Activated CD4-positive, alpha-beta T cell treated with anti-CD3 and anti-CD28 coated beads for 36 hours (primary cell): ENCODE measurements at regions of chr3 and their contacts with region 1.

Region 1: GRCh38 chr3:120417272-120417911 is 33.4 kb downstream of the FSTL1 start:
- DNase-seq: peak; percentile 93
- ATAC-seq: peak; percentile 99
- H3K4me3 Mint-ChIP-seq: peak overlapping the region; percentile 73
- H3K27ac Mint-ChIP-seq: peak overlapping the region; percentile 52
- H3K4me1 Mint-ChIP-seq: peaks cover 11% of the 10 kb centered on the region
- H3K27me3 Mint-ChIP-seq: peaks cover 4% of the 10 kb centered on the region

Region 2: GRCh38 chr3:119819806-119820205 is 597.6 kb before region 1 on chr3:
- CTCF ChIA-PET with region 1: interaction called, 3 read pairs
- POLR2A ChIA-PET with region 1: no interaction called
- intact Hi-C with region 1: loop called in 1 of 2 experiments (anchors 5 kb)
- DNase-seq: no peak
- ATAC-seq: no peak
- H3K4me3 Mint-ChIP-seq: no peak overlapping the region
- H3K27ac Mint-ChIP-seq: no peak overlapping the region
- H3K4me1 Mint-ChIP-seq: no peaks in the 10 kb centered on the region
- H3K27me3 Mint-ChIP-seq: no peaks in the 10 kb centered on the region

Region 3: DNA sequence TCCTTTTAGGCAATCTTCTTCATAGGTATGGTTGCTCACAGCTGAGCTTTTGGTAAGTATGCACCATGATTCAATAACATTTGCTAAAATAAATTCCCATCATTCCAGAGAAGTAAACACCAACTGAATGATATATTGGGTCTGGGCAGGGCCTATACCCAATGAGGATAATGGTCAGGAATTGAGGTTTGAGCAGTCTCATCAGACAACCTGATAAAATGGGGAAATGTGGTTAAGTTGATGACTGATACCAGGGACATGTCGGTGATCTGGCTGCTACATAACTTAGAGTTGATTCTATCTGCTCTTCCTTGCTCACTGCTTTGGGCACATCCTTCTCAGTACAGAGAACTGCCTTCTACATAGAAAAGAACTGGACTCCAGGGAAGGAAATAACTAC is 225.2 kb before region 1 on chr3:
- CTCF ChIA-PET with region 1: no interaction called
- POLR2A ChIA-PET with region 1: no interaction called
- intact Hi-C with region 1: no loop called
- DNase-seq: no peak
- ATAC-seq: no peak
- H3K4me3 Mint-ChIP-seq: no peak overlapping the region
- H3K27ac Mint-ChIP-seq: no peak overlapping the region
- H3K4me1 Mint-ChIP-seq: no peaks in the 10 kb centered on the region
- H3K27me3 Mint-ChIP-seq: no peaks in the 10 kb centered on the region

Region 4: GRCh38 chr3:120239644-120240043 is 177.7 kb before region 1 on chr3:
- CTCF ChIA-PET with region 1: interaction called, 131 read pairs
- POLR2A ChIA-PET with region 1: no interaction called
- intact Hi-C with region 1: loop called (anchors 1 kb)
- DNase-seq: no peak
- ATAC-seq: no peak
- H3K4me3 Mint-ChIP-seq: no peak overlapping the region
- H3K27ac Mint-ChIP-seq: no peak overlapping the region
- H3K4me1 Mint-ChIP-seq: no peaks in the 10 kb centered on the region
- H3K27me3 Mint-ChIP-seq: peaks cover 30% of the 10 kb centered on the region

Region 5: DNA sequence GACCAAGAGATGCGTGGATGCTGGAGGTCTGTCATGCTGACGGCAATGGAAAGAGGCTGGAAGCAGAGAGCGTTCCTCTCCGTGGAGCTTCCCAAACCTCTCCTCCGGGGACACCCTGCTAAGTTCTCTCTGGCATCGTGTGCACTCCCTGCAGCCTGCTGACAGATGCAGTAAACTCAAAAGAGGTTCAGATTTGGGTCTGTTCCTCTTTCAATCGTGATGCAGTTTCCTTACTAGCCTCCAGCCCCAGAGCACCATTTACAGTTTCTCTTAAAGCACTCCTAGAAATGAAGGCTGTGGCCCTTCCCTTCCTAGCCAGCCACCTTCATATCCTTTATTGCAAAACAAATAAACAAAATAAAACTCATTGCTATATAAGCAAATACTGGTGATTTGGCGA is 20.9 kb before region 1 on chr3:
- CTCF ChIA-PET with region 1: interaction called, 18 read pairs
- POLR2A ChIA-PET with region 1: interaction called, 3 read pairs
- intact Hi-C with region 1: no loop called
- DNase-seq: no peak
- ATAC-seq: no peak
- H3K4me3 Mint-ChIP-seq: no peak overlapping the region
- H3K27ac Mint-ChIP-seq: no peak overlapping the region
- H3K4me1 Mint-ChIP-seq: no peaks in the 10 kb centered on the region
- H3K27me3 Mint-ChIP-seq: no peaks in the 10 kb centered on the region

Region 6: DNA sequence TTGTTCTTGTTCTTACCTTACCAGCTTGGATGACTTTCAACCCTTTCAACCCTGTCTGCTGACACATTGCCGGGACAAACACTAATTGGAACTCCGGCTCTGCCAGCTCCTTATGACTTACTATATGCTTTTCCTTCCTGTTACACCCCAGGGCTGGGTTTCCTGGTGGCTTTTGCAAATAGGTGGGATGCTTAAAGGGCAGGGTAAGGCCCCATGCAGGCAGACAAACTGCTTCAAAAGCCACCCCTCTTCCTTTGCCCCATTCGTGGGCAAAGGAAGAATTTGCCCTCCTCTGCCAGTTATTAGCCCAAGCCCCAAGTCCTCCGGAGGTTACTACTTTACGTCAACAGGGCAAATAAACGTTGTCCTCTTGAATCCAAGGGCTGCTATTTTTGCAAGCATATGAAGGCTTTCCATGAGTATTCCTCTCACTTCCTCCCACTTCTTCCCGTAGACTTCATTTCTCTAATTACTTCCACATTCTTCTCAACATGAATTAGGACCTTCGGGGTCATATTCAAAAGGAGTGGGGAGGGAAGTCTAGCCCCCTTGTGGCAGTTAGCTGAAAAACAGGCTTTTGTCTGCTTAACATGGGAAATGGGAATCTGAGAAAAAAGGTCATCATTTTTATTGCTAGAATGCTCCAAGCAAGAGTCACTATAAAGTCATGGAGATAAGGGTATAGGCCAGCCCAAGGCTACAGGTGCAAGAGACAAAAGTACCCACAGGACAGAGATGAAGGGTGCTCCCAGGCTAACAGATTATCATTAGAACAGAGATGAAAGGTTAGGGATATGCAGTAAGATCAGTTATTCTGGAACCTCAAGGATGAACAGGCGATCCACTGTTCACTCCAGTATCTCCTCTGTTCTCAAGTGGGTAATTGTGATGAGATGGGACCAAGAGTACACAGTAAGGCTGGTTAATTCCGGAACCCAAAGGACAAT is 89.7 kb after region 1 on chr3:
- CTCF ChIA-PET with region 1: interaction called, 4 read pairs
- POLR2A ChIA-PET with region 1: no interaction called
- intact Hi-C with region 1: loop called in 1 of 2 experiments (anchors 2 kb)
- DNase-seq: peak; percentile 15
- ATAC-seq: no peak
- H3K4me3 Mint-ChIP-seq: no peak overlapping the region
- H3K27ac Mint-ChIP-seq: no peak overlapping the region
- H3K4me1 Mint-ChIP-seq: no peaks in the 10 kb centered on the region
- H3K27me3 Mint-ChIP-seq: peaks cover 14% of the 10 kb centered on the region

Region 7: GRCh38 chr3:120795017-120795648 is 377.7 kb after region 1 on chr3:
- CTCF ChIA-PET with region 1: interaction called, 4 read pairs
- POLR2A ChIA-PET with region 1: no interaction called
- intact Hi-C with region 1: loop called in 1 of 2 experiments (anchors 1 kb)
- DNase-seq: peak; percentile 92
- ATAC-seq: peak; percentile 99
- H3K4me3 Mint-ChIP-seq: no peak overlapping the region
- H3K27ac Mint-ChIP-seq: no peak overlapping the region
- H3K4me1 Mint-ChIP-seq: peaks cover 10% of the 10 kb centered on the region
- H3K27me3 Mint-ChIP-seq: no peaks in the 10 kb centered on the region